Caco-2 (cell line): ENCODE measurements at regions of chr12 and their contacts with region 1.

Region 1: DNA sequence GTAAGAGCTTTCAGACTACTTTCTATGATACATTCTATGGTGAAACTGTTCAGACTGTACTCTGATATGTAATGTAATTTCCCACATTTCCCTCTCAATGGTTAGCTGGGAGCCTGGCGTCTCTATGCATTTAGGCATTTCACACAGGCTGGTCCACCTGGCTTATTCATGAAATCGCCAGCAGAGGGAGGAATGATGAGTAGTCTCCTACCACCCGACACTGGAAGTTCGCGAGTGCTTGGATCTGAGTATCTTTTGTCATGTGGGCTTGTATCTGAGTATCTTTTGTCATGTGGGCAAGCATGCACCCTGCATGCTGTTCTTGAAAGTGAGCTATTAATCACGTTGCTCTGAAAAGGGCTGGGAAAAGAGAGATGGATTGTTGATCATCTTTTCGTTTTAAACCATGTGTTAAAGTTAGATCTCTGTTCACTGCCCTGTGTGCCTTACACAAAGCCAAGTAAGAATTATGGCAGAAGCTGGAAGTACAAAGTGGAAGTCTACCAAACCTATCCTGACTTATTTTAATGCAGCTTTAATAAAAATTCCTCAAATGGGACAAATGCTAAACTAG is 235.0 kb downstream of the ATP23 start:
- DNase-seq: peak; percentile 61 to 69
- H3K4me3 ChIP-seq: no peak overlapping the region
- H3K4me3 Mint-ChIP-seq: no peak overlapping the region
- H3K27ac Mint-ChIP-seq: no peak overlapping the region
- H3K4me1 ChIP-seq: no peaks in the 10 kb centered on the region
- H3K4me1 Mint-ChIP-seq: no peaks in the 10 kb centered on the region
- H3K27me3 ChIP-seq: no peaks in the 10 kb centered on the region
- H3K27me3 Mint-ChIP-seq: no peaks in the 10 kb centered on the region
- CTCF ChIP-seq: peak; percentile 50 to 56

Region 2: DNA sequence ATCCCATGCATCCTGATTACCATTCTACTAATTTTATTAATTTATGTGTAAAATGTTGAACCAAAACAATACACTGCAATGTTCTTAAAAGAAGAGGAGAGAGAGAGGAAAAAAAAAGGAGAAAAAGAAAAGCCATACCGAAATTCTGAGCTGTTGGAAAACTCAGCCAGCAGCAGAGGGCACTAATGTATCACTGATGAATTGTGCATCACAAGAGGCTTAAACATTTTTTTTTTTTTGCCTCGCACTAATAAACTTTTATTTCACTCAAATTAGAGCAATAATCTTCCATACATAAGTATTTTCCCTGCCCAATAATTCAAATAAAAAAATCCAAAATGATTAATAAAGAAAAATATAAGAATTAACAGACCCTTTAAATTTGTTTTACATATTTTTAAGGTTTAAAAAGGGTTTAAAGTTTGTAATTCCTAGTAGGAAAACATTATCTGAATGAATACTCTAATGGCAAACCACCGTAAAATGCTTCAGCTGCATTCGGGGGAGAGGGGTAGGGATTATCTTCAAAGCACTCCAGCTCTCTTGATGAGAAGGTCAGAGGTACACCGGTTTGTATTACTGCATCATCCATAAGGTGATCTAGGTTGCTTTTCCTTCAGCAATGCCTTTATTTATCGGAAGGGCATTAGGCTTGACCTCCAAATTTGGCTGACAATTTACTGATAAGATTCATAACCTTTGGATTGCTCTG is 193.1 kb before region 1 on chr12:
- CTCF ChIA-PET with region 1: no interaction called
- POLR2A ChIA-PET with region 1: no interaction called
- intact Hi-C with region 1: loop called (anchors 10 kb)
- DNase-seq: peak in 1 of 2 experiments; percentile 50
- H3K4me3 ChIP-seq: no peak overlapping the region
- H3K4me3 Mint-ChIP-seq: no peak overlapping the region
- H3K27ac Mint-ChIP-seq: no peak overlapping the region
- H3K4me1 ChIP-seq: no peaks in the 10 kb centered on the region
- H3K4me1 Mint-ChIP-seq: no peaks in the 10 kb centered on the region
- H3K27me3 ChIP-seq: no peaks in the 10 kb centered on the region
- H3K27me3 Mint-ChIP-seq: no peaks in the 10 kb centered on the region
- CTCF ChIP-seq: peak; percentile 33 to 65

Region 3: DNA sequence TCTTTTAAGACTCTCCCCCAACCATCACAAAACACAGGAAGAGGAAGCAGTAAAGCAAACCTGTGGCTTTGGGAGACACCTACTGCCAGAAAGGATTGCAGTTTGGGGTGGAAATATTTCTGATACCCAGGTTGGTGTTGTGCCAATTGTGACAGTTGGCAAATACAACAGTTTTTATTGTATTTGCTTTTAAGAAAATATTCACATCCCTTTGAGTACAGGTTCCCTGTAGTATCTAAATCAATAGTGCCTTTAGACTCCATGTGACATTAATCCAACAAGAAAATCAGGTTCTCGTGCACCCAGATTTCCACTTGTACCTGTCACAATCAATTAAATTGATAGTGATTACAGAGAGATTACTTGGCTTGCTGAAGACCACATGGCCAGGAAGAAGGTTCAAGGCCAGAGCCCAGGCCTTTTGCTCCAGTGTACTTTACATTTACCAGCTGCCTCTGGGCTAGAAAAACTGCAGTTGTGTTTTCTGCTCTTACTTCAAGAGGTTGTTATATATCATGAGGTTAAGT is 126.2 kb after region 1 on chr12:
- CTCF ChIA-PET with region 1: no interaction called
- POLR2A ChIA-PET with region 1: no interaction called
- intact Hi-C with region 1: loop called (anchors 1 kb)
- DNase-seq: peak in 1 of 2 experiments; percentile 4
- H3K4me3 ChIP-seq: no peak overlapping the region
- H3K4me3 Mint-ChIP-seq: no peak overlapping the region
- H3K27ac Mint-ChIP-seq: no peak overlapping the region
- H3K4me1 ChIP-seq: no peaks in the 10 kb centered on the region; the same call in 1 of the 2 replicates
- H3K4me1 Mint-ChIP-seq: no peaks in the 10 kb centered on the region
- H3K27me3 ChIP-seq: no peaks in the 10 kb centered on the region
- H3K27me3 Mint-ChIP-seq: no peaks in the 10 kb centered on the region
- CTCF ChIP-seq: peak in 1 of 2 experiments; percentile 26

Region 4: GRCh38 chr12:59149997-59150642 is 973.7 kb after region 1 on chr12:
- CTCF ChIA-PET with region 1: no interaction called
- POLR2A ChIA-PET with region 1: no interaction called
- intact Hi-C with region 1: loop called (anchors 2 kb)
- DNase-seq: peak in 1 of 2 experiments; percentile 67
- H3K4me3 ChIP-seq: no peak overlapping the region
- H3K4me3 Mint-ChIP-seq: no peak overlapping the region
- H3K27ac Mint-ChIP-seq: no peak overlapping the region
- H3K4me1 ChIP-seq: no peaks in the 10 kb centered on the region
- H3K4me1 Mint-ChIP-seq: peaks cover 17% of the 10 kb centered on the region
- H3K27me3 ChIP-seq: no peaks in the 10 kb centered on the region
- H3K27me3 Mint-ChIP-seq: no peaks in the 10 kb centered on the region
- CTCF ChIP-seq: peak; percentile 86 to 95